ENCODE measurements at regions of chr11 and their contacts with region 1.

Region 1: DNA sequence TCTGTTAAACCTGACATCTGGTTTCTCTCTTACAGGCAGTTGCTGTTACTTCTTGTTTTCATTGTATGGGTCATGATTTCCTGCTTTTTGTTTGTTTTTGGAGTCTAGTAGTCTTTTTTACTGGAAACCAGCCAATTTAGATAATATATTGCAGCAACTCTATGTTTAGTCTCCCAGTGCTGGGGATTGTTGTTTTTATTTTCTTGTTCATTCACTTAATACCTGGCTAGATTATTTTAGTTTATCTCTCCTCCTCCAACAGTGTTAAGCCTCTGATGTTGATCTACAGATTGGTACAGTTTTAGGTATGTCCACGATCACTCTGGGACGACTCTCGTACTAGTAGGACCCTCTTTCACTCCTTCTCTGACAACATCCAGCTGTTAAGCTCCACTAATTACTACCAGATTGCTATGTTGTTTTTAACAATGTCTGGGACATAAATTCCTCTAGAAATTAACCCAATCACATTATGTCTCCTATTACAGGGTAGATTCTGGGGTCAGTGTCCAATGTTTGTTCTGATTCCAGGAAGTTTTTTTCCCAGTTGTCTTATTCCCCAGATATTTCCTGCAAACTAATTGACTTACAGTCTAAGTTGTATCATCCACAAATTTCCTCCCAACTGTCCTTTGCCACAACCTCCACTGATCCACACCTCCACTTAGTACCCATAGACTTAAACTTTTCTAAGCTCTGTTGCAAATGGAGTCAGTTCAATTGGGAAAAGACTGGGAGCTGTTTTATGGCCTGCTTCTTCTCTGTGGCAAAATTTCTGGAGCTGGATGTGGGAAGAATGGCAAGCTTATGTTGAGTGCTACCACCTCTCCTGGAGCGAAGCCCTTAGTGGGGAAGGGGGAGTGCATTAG is 1280.6 kb upstream of the CNTN5 start:
- DNase-seq: no peak
- H3K4me3 ChIP-seq: no peak overlapping the region
- H3K27me3 ChIP-seq: no peaks in the 10 kb centered on the region
- CTCF ChIP-seq: no peak

Region 2: DNA sequence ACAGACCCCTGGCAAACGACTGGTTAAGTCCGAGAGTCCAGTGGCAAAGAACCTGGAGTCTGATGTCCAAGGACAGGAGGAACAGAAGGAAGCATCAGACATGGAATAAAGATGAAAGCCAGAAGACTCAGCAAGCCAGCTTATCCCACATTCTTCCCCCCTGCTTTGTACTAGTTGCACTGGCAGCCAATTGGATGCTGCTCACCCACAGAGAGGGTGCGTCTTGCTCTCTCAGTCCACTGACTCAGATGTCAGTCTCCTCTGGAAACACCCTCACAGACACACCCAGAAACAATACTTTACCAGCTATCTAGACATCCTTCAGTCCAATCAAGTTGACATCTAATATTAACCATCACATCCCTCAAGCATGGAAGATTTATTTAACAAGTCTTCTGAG is 14.8 kb after region 1 on chr11:
- CTCF ChIA-PET with region 1: no interaction called
- POLR2A ChIA-PET with region 1: interaction called, 16 read pairs
- DNase-seq: no peak
- H3K4me3 ChIP-seq: no peak overlapping the region
- H3K27me3 ChIP-seq: no peaks in the 10 kb centered on the region
- CTCF ChIP-seq: no peak

Measured in BJ (cell line).